MCF 10A (cell line): ENCODE measurements at regions of chr10 and their contacts with region 1.

Region 1: GRCh38 chr10:92592761-92593618 is at the start of gene KIF11:
- DNase-seq: peak; percentile 98
- H3K4me3 Mint-ChIP-seq: peak within 1 kb of the TSS; percentile 99
- H3K27ac Mint-ChIP-seq: peak within 1 kb of the TSS; percentile 97
- H3K4me1 Mint-ChIP-seq: peaks cover 35% of the 10 kb centered on the region
- H3K27me3 Mint-ChIP-seq: no peaks in the 10 kb centered on the region
- CTCF ChIP-seq: no peak
- total RNA-seq, gene KIF11: 21.3 and 27.3 TPM in 2 replicates

Region 2: GRCh38 chr10:92313750-92314149 is 279.2 kb before region 1 on chr10:
- CTCF ChIA-PET with region 1: no interaction called
- POLR2A ChIA-PET with region 1: no interaction called
- intact Hi-C with region 1: no loop called
- DNase-seq: no peak
- H3K4me3 Mint-ChIP-seq: no peak overlapping the region
- H3K27ac Mint-ChIP-seq: no peak overlapping the region
- H3K4me1 Mint-ChIP-seq: no peaks in the 10 kb centered on the region
- H3K27me3 Mint-ChIP-seq: no peaks in the 10 kb centered on the region
- CTCF ChIP-seq: no peak

Region 3: DNA sequence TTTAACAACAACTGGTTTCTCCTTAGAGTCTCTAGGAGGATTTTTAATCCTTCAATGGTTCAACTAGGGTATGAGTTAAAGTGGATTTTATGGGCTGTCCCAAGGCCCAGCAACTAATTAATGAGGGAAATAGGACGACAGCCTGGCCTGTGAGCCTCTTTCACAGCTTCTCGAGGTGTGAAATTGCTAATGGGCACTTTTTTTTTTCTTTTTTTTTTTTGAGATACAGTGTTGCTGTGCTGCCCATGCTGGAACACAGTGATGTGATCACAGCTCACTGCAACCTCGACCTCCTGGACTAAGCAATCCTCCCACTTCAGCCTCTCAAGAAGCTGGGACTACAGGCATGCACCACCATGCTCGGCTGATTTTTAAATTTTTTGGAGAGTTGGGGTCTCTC is 215.0 kb before region 1 on chr10:
- CTCF ChIA-PET with region 1: no interaction called
- POLR2A ChIA-PET with region 1: no interaction called
- intact Hi-C with region 1: no loop called
- DNase-seq: no peak
- H3K4me3 Mint-ChIP-seq: no peak overlapping the region
- H3K27ac Mint-ChIP-seq: no peak overlapping the region
- H3K4me1 Mint-ChIP-seq: no peaks in the 10 kb centered on the region
- H3K27me3 Mint-ChIP-seq: peaks cover 16% of the 10 kb centered on the region
- CTCF ChIP-seq: no peak

Region 4: GRCh38 chr10:92573798-92574547 is 19.0 kb before region 1 on chr10 and contains the start of gene IDE:
- CTCF ChIA-PET with region 1: interaction called, 5 read pairs
- POLR2A ChIA-PET with region 1: interaction called, 157 read pairs
- intact Hi-C with region 1: no loop called
- DNase-seq: peak; percentile 81
- H3K4me3 Mint-ChIP-seq: peak within 1 kb of the TSS; percentile 76
- H3K27ac Mint-ChIP-seq: peak within 1 kb of the TSS; percentile 65
- H3K4me1 Mint-ChIP-seq: peaks cover 25% of the 10 kb centered on the region
- H3K27me3 Mint-ChIP-seq: no peaks in the 10 kb centered on the region
- CTCF ChIP-seq: peak; percentile 84
- total RNA-seq, gene IDE: 54.6 and 66.4 TPM in 2 replicates

Region 5: GRCh38 chr10:92619368-92619767 is 26.4 kb after region 1 on chr10:
- CTCF ChIA-PET with region 1: no interaction called
- POLR2A ChIA-PET with region 1: interaction called, 10 read pairs
- intact Hi-C with region 1: no loop called
- DNase-seq: no peak
- H3K4me3 Mint-ChIP-seq: no peak overlapping the region
- H3K27ac Mint-ChIP-seq: no peak overlapping the region
- H3K4me1 Mint-ChIP-seq: no peaks in the 10 kb centered on the region
- H3K27me3 Mint-ChIP-seq: no peaks in the 10 kb centered on the region
- CTCF ChIP-seq: no peak

Region 6: DNA sequence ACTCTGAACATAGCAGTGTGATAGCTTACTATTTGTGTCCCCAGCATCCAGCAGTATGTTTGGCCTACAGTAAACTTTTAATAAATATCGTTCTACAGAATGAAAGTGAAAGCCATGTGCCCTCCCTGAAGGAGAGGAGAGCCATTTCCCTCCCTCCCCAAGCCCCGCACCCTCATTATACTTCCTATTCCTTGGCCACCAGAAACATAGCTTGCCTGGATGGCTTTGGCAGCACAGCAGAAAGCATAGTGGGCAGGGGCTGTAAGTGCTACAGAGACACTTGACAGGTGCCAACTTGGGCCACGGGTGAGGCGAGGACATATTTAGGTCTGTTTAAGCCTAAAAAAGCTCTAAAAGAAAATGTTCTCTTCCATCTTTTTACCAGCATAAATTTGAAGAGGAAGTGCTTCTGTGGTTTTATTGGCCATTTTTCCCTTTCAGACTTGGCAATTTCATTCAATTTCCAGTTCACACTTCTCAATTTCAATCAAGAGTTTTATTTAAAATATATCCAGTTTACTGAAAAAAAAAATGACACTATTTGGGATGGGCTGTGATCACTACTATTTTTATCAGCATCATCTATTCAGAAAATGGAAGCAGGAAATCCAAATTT is 109.4 kb after region 1 on chr10:
- CTCF ChIA-PET with region 1: no interaction called
- POLR2A ChIA-PET with region 1: no interaction called
- intact Hi-C with region 1: no loop called
- DNase-seq: no peak
- H3K4me3 Mint-ChIP-seq: no peak overlapping the region
- H3K27ac Mint-ChIP-seq: no peak overlapping the region
- H3K4me1 Mint-ChIP-seq: no peaks in the 10 kb centered on the region
- H3K27me3 Mint-ChIP-seq: no peaks in the 10 kb centered on the region
- CTCF ChIP-seq: no peak

Region 7: DNA sequence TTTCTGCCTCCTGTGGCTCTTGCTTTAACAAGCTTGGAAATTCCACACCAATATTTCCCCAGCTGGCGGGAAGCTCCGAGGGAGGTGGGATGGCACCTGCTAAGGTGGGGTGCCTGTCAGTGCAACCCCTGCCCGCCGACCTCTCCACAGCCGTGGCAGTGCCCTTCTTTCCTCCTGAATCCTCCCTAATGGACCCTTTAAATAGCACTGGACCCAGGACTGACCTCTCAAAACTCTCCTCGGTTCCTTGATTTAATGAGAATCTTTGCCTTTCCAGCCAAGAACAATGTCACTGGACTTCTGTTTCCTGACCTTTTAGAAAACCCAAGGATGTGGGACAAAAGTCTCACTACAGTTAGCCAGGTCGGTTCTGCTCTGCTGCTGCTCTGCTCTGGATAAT is 192.1 kb after region 1 on chr10:
- CTCF ChIA-PET with region 1: no interaction called
- POLR2A ChIA-PET with region 1: no interaction called
- intact Hi-C with region 1: no loop called
- DNase-seq: no peak
- H3K4me3 Mint-ChIP-seq: no peak overlapping the region
- H3K27ac Mint-ChIP-seq: no peak overlapping the region
- H3K4me1 Mint-ChIP-seq: no peaks in the 10 kb centered on the region
- H3K27me3 Mint-ChIP-seq: no peaks in the 10 kb centered on the region
- CTCF ChIP-seq: no peak

Region 8: GRCh38 chr10:92848441-92849233 is 255.6 kb after region 1 on chr10 and contains the start of gene EXOC6:
- CTCF ChIA-PET with region 1: interaction called, 3 read pairs
- POLR2A ChIA-PET with region 1: interaction called, 11 read pairs
- intact Hi-C with region 1: loop called (anchors 10 kb)
- DNase-seq: peak; percentile 81
- H3K4me3 Mint-ChIP-seq: peak within 1 kb of the TSS; percentile 80
- H3K27ac Mint-ChIP-seq: peak within 1 kb of the TSS; percentile 59
- H3K4me1 Mint-ChIP-seq: peaks cover 12% of the 10 kb centered on the region
- H3K27me3 Mint-ChIP-seq: no peaks in the 10 kb centered on the region
- CTCF ChIP-seq: peak; percentile 14
- total RNA-seq, gene EXOC6: 5.9 and 6.6 TPM in 2 replicates